ENCODE measurements at regions of chr9 and their contacts with region 1.

Region 1: DNA sequence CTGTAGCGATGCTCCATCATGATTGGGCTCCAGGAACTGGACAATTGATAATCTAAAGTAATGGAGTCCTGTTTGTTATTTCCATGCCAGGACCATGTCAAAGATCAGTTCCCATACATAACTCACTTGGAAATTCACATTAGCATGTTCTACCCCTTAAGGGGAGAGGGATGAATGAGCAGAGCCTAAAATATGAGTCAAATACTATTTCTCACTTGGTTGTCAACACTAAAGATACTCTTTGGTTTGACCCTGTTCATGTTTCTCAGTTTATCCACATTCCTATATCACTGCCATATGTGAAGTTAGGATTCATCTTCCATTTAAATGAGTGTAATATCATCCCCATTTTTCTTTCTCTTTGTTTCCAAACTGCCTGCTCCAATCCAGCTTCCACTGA is 321.6 kb upstream of the PAPPA start:
- DNase-seq: no peak
- H3K4me3 ChIP-seq: no peak overlapping the region
- H3K4me3 Mint-ChIP-seq: no peak overlapping the region
- H3K27ac ChIP-seq: no peak overlapping the region
- H3K27ac Mint-ChIP-seq: no peak overlapping the region
- H3K4me1 ChIP-seq: no peaks in the 10 kb centered on the region
- H3K4me1 Mint-ChIP-seq: no peaks in the 10 kb centered on the region
- H3K27me3 ChIP-seq: no peaks in the 10 kb centered on the region
- H3K27me3 Mint-ChIP-seq: peaks cover 0 to 2% (median 0%) of the 10 kb centered on the region in 3 donors
- CTCF ChIP-seq: no peak

Region 2: DNA sequence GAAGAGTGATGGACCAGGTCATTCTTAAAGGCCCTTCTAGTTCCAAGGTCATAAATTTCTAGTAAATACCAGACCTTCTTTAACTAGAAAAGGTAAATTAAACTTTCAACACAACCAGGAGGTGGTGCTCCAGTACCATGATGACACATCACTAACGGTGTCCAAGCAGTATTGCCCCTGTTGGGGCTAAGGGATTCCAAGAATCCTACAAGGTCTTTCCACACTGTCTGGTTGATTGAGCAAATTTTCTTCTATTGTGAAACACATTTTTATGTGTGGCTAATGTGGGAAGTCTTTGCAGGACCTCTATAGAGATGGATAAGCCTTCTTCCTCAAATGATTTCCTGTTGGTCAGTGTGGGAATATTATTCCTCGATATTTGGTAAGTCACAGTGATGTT is 138.0 kb before region 1 on chr9:
- intact Hi-C with region 1: no loop called
- DNase-seq: no peak
- H3K4me3 ChIP-seq: no peak overlapping the region
- H3K4me3 Mint-ChIP-seq: no peak overlapping the region
- H3K27ac ChIP-seq: no peak overlapping the region
- H3K27ac Mint-ChIP-seq: no peak overlapping the region
- H3K4me1 ChIP-seq: no peaks in the 10 kb centered on the region
- H3K4me1 Mint-ChIP-seq: no peaks in the 10 kb centered on the region
- H3K27me3 ChIP-seq: no peaks in the 10 kb centered on the region
- H3K27me3 Mint-ChIP-seq: peaks cover 0 to 3% (median 0%) of the 10 kb centered on the region in 3 donors
- CTCF ChIP-seq: no peak

Region 3: DNA sequence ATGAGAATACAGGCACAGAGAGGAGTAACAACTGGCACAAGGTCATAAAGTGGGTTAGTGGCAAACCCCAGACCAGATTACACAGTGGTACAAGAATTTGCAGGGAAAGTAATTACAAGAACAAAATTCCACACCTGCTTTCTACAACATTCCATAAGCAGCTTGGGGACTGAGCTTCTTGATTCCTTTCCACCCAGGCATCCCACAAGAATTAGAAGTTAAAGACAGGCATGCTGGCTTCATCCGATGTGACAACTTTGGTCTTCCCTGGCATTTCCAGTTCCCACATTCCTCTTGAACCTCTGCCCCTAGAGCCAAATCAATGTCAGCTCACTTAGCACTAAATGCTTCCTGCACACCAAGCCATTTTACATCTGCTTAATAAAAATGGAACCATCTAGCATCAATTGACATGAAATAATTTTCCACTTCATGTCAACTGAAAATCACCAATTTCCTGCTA is 114.3 kb before region 1 on chr9:
- intact Hi-C with region 1: no loop called
- DNase-seq: no peak
- H3K4me3 ChIP-seq: no peak overlapping the region
- H3K4me3 Mint-ChIP-seq: no peak overlapping the region
- H3K27ac ChIP-seq: no peak overlapping the region
- H3K27ac Mint-ChIP-seq: no peak overlapping the region
- H3K4me1 ChIP-seq: no peaks in the 10 kb centered on the region
- H3K4me1 Mint-ChIP-seq: no peaks in the 10 kb centered on the region
- H3K27me3 ChIP-seq: no peaks in the 10 kb centered on the region
- H3K27me3 Mint-ChIP-seq: no peaks in the 10 kb centered on the region
- CTCF ChIP-seq: no peak

Region 4: DNA sequence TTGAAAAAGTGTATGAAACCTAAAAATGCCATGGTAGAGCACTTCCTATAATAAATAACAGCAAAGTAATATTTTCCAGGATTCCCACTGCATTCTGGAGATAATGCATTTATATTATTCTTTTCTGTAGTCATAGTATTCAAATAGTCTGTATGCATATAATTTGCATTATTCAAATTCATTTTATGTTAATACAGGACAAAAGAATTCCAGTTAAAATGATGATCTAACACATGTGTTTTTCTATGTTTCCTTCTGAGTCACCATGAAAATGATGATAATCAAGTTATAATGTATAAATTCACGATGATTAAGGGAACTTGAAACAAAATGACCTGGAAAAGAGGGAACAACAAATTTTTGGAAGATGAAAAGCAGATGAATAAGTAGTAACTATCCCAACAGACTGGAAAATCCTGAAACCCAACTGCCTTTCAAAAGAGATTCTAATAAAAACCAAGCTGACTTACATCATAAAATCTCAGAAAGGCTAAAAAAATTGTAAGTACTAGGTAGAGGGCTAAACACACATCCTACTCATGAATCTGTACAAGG is 37.0 kb before region 1 on chr9:
- intact Hi-C with region 1: no loop called
- DNase-seq: no peak
- H3K4me3 ChIP-seq: no peak overlapping the region
- H3K4me3 Mint-ChIP-seq: no peak overlapping the region
- H3K27ac ChIP-seq: no peak overlapping the region
- H3K27ac Mint-ChIP-seq: no peak overlapping the region
- H3K4me1 ChIP-seq: no peaks in the 10 kb centered on the region
- H3K4me1 Mint-ChIP-seq: no peaks in the 10 kb centered on the region
- H3K27me3 ChIP-seq: no peaks in the 10 kb centered on the region
- H3K27me3 Mint-ChIP-seq: peaks cover 0 to 2% (median 0%) of the 10 kb centered on the region in 3 donors
- CTCF ChIP-seq: no peak

Region 5: DNA sequence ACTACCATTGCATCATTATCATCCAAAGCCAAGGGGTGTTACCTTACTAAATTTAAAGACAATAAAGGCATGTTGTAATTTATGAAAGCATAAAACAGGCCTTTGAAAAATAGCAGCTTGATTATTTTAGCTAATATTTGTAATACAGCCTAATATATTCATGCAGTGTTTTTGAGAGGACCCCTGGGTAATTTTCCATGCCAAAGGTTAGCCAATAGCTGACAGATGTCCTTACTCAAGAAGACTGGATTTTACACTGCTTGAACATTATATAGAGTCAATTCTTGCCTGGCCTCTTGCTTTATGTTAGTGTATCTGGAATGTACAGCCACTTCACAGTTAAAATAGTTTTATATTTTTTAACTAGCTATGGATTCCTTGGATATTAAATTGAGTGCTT is 16.2 kb before region 1 on chr9:
- intact Hi-C with region 1: loop called in 1 of 2 experiments (anchors 1 kb)
- DNase-seq: no peak
- H3K4me3 ChIP-seq: no peak overlapping the region
- H3K4me3 Mint-ChIP-seq: no peak overlapping the region
- H3K27ac ChIP-seq: no peak overlapping the region
- H3K27ac Mint-ChIP-seq: no peak overlapping the region
- H3K4me1 ChIP-seq: no peaks in the 10 kb centered on the region
- H3K4me1 Mint-ChIP-seq: no peaks in the 10 kb centered on the region
- H3K27me3 ChIP-seq: no peaks in the 10 kb centered on the region
- H3K27me3 Mint-ChIP-seq: no peaks in the 10 kb centered on the region
- CTCF ChIP-seq: no peak